Endothelial cell of umbilical vein (primary cell): ENCODE measurements at regions of chr17 and their contacts with region 1.

Region 1: DNA sequence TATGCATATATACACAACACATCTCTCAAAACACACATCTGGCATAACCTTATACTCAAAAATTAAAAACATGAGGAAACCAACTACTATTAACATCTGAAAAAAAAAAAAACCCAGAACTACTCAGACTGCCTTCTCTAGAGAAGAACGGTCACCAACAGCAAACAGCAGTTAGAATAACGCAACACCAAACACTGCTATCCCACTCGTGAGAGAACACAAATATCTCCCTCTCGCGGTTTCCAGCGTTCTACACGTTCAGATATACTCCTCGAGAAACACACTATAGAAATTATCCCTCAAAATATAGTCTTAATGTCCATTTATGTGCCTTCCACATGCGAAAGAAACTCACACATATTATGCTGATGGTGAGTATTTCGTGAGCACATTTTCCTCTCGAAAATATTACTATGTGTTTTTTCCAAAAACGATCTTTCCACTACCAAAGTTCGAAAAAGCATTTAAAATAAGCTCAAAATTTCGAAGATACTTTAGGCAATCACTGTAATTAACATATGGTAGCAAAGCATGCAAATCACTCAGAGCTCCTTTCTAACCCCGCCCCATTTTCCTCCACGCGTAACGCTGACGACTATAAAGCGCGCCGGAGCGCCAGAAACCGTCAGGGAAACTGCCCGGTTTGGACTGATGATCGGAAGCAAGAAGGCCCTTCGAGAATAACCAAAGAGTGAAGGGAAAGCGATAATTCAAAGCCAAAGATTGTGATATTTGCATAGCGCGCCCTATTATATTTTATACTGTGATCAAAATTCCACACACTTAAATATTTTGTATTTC is 60.1 kb downstream of the TEX14 start:
- DNase-seq: peak; percentile 98
- H3K4me3 ChIP-seq: peak overlapping the region in 2 of 3 experiments; percentile 23 to 52
- H3K27ac ChIP-seq: peak overlapping the region; percentile 97
- H3K4me1 ChIP-seq: peaks cover 11% of the 10 kb centered on the region
- H3K27me3 ChIP-seq: no peaks in the 10 kb centered on the region
- CTCF ChIP-seq: peak in 1 of 2 donors; percentile 32
- POLR2A ChIP-seq: peak; percentile 100

Region 2: GRCh38 chr17:57629470-57629869 is 1002.3 kb before region 1 on chr17:
- CTCF ChIA-PET with region 1: no interaction called
- POLR2A ChIA-PET with region 1: no interaction called
- dilution Hi-C with region 1: no loop called
- intact Hi-C with region 1: no loop called
- DNase-seq: no peak
- H3K4me3 ChIP-seq: no peak overlapping the region
- H3K27ac ChIP-seq: no peak overlapping the region
- H3K4me1 ChIP-seq: no peaks in the 10 kb centered on the region
- H3K27me3 ChIP-seq: no peaks in the 10 kb centered on the region
- CTCF ChIP-seq: no peak
- POLR2A ChIP-seq: no peak

Region 3: GRCh38 chr17:58531661-58532554 is 99.8 kb before region 1 on chr17:
- CTCF ChIA-PET with region 1: no interaction called
- POLR2A ChIA-PET with region 1: interaction called, 11 read pairs
- dilution Hi-C with region 1: no loop called
- intact Hi-C with region 1: no loop called
- DNase-seq: peak; percentile 56
- H3K4me3 ChIP-seq: peak overlapping the region in 2 of 3 experiments; percentile 39 to 44
- H3K27ac ChIP-seq: no peak overlapping the region
- H3K4me1 ChIP-seq: peaks cover 15% of the 10 kb centered on the region
- H3K27me3 ChIP-seq: peaks cover 3 to 5% of the 10 kb centered on the region in 2 experiments
- CTCF ChIP-seq: no peak
- POLR2A ChIP-seq: no peak

Region 4: GRCh38 chr17:58643140-58643539 is 11.4 kb after region 1 on chr17:
- CTCF ChIA-PET with region 1: interaction called, 11 read pairs
- POLR2A ChIA-PET with region 1: interaction called, 35 read pairs
- dilution Hi-C with region 1: no loop called
- intact Hi-C with region 1: loop called (anchors 1 kb)
- DNase-seq: peak; percentile 35
- H3K4me3 ChIP-seq: no peak overlapping the region
- H3K27ac ChIP-seq: peak overlapping the region; percentile 22
- H3K4me1 ChIP-seq: peaks cover 20% of the 10 kb centered on the region
- H3K27me3 ChIP-seq: no peaks in the 10 kb centered on the region
- CTCF ChIP-seq: no peak
- POLR2A ChIP-seq: no peak

Region 5: DNA sequence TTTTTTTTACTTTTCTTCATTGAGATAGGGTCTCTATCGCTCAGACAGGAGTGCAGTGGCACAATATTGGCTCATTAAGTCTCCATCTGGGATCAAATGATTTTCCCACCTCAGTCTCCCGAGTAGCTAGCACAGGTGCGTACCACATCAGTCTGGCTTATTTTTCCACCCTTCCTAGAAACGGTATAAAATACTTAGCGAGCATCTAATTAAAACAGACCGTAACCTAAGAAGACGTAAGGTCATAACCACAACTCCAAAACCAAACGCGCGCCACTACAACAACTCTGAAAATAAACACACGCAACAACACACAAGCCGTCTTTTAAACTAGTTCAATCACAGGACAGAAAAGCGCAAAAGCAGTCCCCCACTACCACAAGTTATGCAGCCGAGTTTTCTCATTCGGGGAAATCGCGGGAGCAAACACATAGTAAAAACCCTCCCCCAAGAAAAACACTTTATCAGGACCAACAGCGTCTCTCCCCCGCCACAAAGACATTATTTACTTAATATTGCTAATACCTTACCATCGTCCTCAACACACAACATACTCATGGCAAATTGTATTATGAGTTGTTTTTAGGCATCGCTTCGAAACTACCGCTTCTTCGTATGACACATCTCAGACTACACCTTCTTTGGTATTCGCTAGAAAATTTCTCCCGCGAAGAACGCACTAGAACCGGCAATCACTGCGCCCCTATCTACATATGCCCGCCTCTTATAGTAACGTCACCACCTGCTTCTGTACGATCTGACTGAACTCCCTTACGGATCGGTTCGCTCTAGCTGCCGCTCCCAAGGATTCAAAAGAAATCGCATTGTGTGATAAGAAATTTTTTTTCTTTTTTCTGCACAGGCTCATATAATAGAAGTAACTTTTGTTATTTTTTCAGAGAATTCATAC is 27.3 kb after region 1 on chr17:
- CTCF ChIA-PET with region 1: interaction called, 3 read pairs
- POLR2A ChIA-PET with region 1: interaction called, 105 read pairs
- dilution Hi-C with region 1: no loop called
- intact Hi-C with region 1: loop called (anchors 1 kb)
- DNase-seq: peak; percentile 98
- H3K4me3 ChIP-seq: peak overlapping the region; percentile 26 to 42 (median 28)
- H3K27ac ChIP-seq: peak overlapping the region; percentile 94
- H3K4me1 ChIP-seq: no peaks in the 10 kb centered on the region
- H3K27me3 ChIP-seq: no peaks in the 10 kb centered on the region
- CTCF ChIP-seq: no peak
- POLR2A ChIP-seq: peak; percentile 100

Region 6: GRCh38 chr17:58692239-58693055 is 60.7 kb after region 1 on chr17 and contains the start of gene RAD51C:
- CTCF ChIA-PET with region 1: no interaction called
- POLR2A ChIA-PET with region 1: interaction called, 21 read pairs
- dilution Hi-C with region 1: no loop called
- intact Hi-C with region 1: loop called (anchors 1 kb)
- DNase-seq: peak; percentile 82
- H3K4me3 ChIP-seq: peak within 1 kb of the TSS; percentile 8 to 69 (median 65)
- H3K27ac ChIP-seq: peak within 1 kb of the TSS; percentile 50
- H3K4me1 ChIP-seq: peaks cover 14% of the 10 kb centered on the region
- H3K27me3 ChIP-seq: no peaks in the 10 kb centered on the region
- CTCF ChIP-seq: no peak
- POLR2A ChIP-seq: peak; percentile 87
- total RNA-seq, gene RAD51C: 38.9 and 50.5 TPM in 2 replicates

Region 7: DNA sequence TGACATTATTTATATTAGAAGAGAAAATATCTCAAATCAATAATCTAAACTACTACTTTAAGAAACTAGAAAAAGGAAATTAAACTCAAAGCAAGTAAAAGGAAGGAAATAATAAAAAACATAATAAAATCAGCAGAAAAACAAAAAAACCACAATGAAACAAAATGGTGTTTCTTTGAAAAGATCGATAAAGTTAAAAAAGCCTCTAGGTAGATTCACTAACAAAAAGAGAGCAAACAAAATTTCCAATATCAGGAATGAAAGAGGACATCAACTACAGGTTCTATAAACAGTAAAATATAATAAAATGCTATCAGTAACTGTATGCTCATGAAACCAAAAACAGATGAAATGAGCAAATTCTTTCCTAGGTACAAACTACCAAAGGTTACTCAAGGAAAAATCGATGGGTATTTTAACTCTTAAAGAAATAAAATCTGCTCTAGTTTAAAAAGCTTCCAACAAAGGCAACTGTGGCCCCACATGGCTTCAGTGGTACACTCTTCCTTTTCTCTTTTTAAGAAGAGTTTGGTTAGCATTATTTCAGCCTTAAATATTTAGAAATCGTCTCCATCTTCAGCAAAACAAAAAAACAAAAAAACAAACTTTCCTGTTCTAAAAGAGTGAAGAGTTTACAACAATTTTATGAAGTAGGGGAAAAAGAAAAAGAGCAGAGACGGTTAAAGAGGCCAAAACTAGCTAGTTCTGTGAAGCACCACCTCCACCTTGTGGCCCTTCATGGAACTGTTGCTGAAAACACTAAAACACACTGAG is 372.8 kb after region 1 on chr17:
- CTCF ChIA-PET with region 1: interaction called, 17 read pairs
- POLR2A ChIA-PET with region 1: interaction called, 15 read pairs
- dilution Hi-C with region 1: no loop called
- intact Hi-C with region 1: loop called (anchors 2 kb)
- DNase-seq: peak; percentile 74
- H3K4me3 ChIP-seq: no peak overlapping the region
- H3K27ac ChIP-seq: no peak overlapping the region
- H3K4me1 ChIP-seq: peaks cover 30% of the 10 kb centered on the region
- H3K27me3 ChIP-seq: no peaks in the 10 kb centered on the region
- CTCF ChIP-seq: peak; percentile 69 to 79
- POLR2A ChIP-seq: no peak

Region 8: DNA sequence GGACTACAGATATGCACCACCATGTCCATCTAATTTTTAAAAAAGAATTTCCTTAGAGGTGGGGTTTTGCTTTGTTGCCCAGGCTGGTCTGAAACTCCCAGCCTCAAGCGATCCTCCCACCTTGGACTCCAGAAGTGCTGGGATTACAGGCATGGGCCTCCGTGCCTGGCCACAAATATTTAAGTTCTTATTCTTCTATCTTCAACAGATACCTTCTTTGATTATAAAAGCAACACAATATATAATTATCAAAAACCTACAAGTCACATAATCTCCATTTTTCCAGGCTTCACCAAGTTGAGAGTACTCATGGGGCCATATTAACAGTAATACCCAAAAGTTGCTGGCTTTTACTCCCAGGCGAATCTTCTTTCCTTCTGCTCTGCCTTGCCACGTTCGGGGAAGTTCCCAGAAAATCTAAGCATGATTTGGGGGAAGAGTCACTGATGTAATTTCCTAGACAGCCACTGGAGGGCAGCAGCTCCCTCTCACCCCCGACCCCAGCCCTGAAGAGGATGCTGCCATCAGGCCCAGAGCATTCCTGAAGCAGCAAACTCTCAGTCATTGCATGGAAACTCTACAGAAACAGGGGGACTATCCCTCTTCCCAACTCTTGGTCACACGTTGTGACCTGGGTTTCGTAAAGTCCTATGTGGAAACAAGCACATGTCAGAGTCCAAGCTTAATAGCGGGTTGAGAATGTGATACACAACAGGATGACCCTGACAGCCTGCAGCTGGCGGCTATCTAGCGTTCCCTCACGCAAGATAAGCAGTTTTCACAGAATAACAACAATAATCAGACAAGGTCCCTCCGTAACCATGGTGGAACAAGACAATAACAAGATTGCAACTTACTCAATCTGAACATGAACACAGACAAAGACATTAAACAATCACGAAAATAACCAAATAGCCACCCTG is 889.7 kb after region 1 on chr17:
- CTCF ChIA-PET with region 1: no interaction called
- POLR2A ChIA-PET with region 1: no interaction called
- dilution Hi-C with region 1: no loop called
- intact Hi-C with region 1: no loop called
- DNase-seq: peak; percentile 72
- H3K4me3 ChIP-seq: no peak overlapping the region
- H3K27ac ChIP-seq: no peak overlapping the region
- H3K4me1 ChIP-seq: no peaks in the 10 kb centered on the region
- H3K27me3 ChIP-seq: peaks cover 2 to 7% of the 10 kb centered on the region in 2 experiments
- CTCF ChIP-seq: peak; percentile 75 to 79
- POLR2A ChIP-seq: no peak